ENCODE measurements at regions of chr7 and their contacts with region 1.

Region 1: GRCh38 chr7:20310963-20311742 is 19.5 kb upstream of the ITGB8 start:
- DNase-seq: peak in 2 of 4 experiments; percentile 24 to 75
- ATAC-seq: peak; percentile 74
- H3K4me3 ChIP-seq: no peak overlapping the region
- H3K27ac ChIP-seq: no peak overlapping the region
- H3K4me1 ChIP-seq: peaks cover 9 to 14% of the 10 kb centered on the region in 2 experiments
- H3K27me3 ChIP-seq: no peaks in the 10 kb centered on the region
- CTCF ChIP-seq: peak; percentile 34 to 61 (median 50); a peak in 3 of 6 replicates
- EP300 ChIP-seq: no peak
- POLR2A ChIP-seq: no peak
- RAD21 ChIP-seq: peak; percentile 85 to 86

Region 2: DNA sequence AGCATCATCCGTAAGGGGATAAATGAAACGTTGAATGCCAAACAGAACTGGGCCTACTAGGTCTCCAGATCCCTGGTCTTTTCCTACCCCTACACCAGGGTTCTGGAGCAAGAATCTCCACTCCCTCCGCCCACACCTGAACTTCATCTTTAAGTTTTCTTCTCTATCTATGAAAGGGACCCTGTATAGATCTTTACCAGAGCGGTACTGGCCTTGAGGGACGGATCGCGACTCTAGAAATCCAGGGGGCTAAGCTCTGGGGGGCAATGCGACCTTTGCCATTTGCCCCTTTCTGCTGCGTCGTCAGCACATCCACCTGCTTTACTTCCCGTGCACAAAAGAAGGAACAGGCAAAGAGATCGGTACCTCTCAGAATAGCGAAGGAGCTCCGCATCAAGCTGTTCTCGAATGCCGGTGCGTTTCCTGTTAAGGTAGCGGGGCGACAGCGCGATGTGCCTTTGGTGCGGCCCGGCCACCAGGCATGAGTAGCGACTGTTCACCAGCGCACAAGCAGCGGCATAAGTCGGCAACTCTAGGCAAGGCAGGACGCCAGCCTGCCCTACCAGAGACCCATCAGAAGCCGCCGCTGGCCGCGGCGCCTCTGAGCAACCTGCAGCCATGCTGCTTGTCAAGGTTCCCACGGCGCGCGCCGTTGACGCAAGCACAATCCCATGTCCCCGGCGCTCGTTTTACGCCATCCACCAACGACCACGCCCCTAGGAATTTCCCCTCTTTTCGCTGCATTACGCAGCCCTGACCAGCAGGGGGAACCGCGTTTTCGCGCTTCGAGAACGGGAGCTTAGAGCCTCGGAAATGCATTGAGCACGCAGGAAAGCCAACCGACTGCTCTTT is 602.5 kb before region 1 on chr7 and contains the start of gene POLR1F:
- CTCF ChIA-PET with region 1: interaction called, 6 read pairs
- POLR2A ChIA-PET with region 1: no interaction called
- in situ Hi-C with region 1: no loop called
- intact Hi-C with region 1: loop called (anchors 5 kb)
- DNase-seq: peak; percentile 85 to 96 (median 88)
- ATAC-seq: peak; percentile 96
- H3K4me3 ChIP-seq: peak within 1 kb of the TSS; percentile 64
- H3K27ac ChIP-seq: peak within 1 kb of the TSS; percentile 60
- H3K4me1 ChIP-seq: peaks cover 0 to 18% of the 10 kb centered on the region in 2 experiments; a peak in 2 of 5 replicates
- H3K27me3 ChIP-seq: no peaks in the 10 kb centered on the region; a peak in 1 of 5 replicates
- CTCF ChIP-seq: peak; percentile 84 to 96 (median 94)
- EP300 ChIP-seq: no peak; the same call in 1 of the 2 replicates
- POLR2A ChIP-seq: peak; percentile 95
- RAD21 ChIP-seq: peak; percentile 53 to 54
- polyA plus RNA-seq, gene POLR1F: 93.5 to 95.3 TPM

Region 3: GRCh38 chr7:19982841-19983835 is 328.0 kb before region 1 on chr7:
- CTCF ChIA-PET with region 1: no interaction called
- POLR2A ChIA-PET with region 1: no interaction called
- in situ Hi-C with region 1: no loop called
- intact Hi-C with region 1: loop called (anchors 2 kb)
- DNase-seq: peak in 1 of 4 experiments; percentile 36
- ATAC-seq: no peak; the same call in 2 of the 3 replicates
- H3K4me3 ChIP-seq: no peak overlapping the region
- H3K27ac ChIP-seq: no peak overlapping the region
- H3K4me1 ChIP-seq: no peaks in the 10 kb centered on the region
- H3K27me3 ChIP-seq: no peaks in the 10 kb centered on the region
- CTCF ChIP-seq: peak in 2 of 3 experiments; percentile 22 to 29; a peak in 2 of 6 replicates
- EP300 ChIP-seq: no peak
- POLR2A ChIP-seq: no peak
- RAD21 ChIP-seq: peak; percentile 45 to 70

Region 4: DNA sequence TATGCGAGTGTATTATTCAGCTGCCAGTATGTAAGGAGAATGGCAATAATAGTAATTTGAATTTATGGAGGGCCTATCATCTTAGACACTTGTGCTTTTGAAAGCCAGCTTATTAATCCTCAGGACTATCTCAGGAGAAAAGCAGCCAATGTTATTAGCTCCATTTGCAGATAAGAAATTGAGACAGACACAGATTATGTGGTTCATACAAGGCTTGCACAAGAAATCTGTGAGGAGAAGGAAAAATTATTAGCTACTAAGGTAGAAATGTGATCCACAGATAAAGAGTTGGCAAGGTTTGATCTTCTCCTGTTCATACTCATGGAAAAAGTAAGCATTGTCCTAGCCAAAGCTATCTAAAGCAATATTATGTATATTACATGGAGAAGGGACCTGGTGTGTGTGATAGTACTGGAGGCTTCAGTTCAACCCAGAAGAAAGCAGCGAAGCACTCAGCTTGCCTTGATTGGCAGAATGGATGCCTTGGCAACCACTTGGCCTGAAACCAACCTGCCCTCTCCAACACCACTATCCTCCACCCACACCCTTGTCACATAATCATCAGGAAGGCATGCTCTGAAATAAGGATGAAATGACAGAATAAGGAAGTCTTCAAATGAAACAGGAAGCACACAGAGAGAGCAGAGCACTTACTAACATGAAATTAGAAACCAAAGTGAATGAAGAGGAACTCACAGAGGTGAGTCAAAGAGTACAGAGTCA is 112.0 kb before region 1 on chr7:
- CTCF ChIA-PET with region 1: no interaction called
- POLR2A ChIA-PET with region 1: no interaction called
- in situ Hi-C with region 1: no loop called
- intact Hi-C with region 1: loop called (anchors 5 kb)
- DNase-seq: peak; percentile 18 to 76 (median 33)
- ATAC-seq: peak; percentile 84
- H3K4me3 ChIP-seq: no peak overlapping the region
- H3K27ac ChIP-seq: peak overlapping the region; percentile 62; the same call in 2 of the 3 replicates
- H3K4me1 ChIP-seq: peaks cover 0 to 42% of the 10 kb centered on the region in 2 experiments; a peak in 4 of 5 replicates
- H3K27me3 ChIP-seq: no peaks in the 10 kb centered on the region
- CTCF ChIP-seq: no peak
- EP300 ChIP-seq: 0 out of 2 replicates have a peak, but pooled peaks have one; percentile 21
- POLR2A ChIP-seq: no peak
- RAD21 ChIP-seq: no peak

Region 5: GRCh38 chr7:20598459-20599309 is 287.5 kb after region 1 on chr7:
- CTCF ChIA-PET with region 1: no interaction called
- POLR2A ChIA-PET with region 1: no interaction called
- in situ Hi-C with region 1: no loop called
- intact Hi-C with region 1: loop called (anchors 5 kb)
- DNase-seq: peak; percentile 27 to 58 (median 40)
- ATAC-seq: peak; percentile 88
- H3K4me3 ChIP-seq: no peak overlapping the region
- H3K27ac ChIP-seq: no peak overlapping the region
- H3K4me1 ChIP-seq: no peaks in the 10 kb centered on the region
- H3K27me3 ChIP-seq: no peaks in the 10 kb centered on the region; a peak in 1 of 5 replicates
- CTCF ChIP-seq: peak; percentile 57 to 87 (median 71); a peak in 5 of 6 replicates
- EP300 ChIP-seq: no peak
- POLR2A ChIP-seq: no peak
- RAD21 ChIP-seq: peak; percentile 92 to 96

Region 6: DNA sequence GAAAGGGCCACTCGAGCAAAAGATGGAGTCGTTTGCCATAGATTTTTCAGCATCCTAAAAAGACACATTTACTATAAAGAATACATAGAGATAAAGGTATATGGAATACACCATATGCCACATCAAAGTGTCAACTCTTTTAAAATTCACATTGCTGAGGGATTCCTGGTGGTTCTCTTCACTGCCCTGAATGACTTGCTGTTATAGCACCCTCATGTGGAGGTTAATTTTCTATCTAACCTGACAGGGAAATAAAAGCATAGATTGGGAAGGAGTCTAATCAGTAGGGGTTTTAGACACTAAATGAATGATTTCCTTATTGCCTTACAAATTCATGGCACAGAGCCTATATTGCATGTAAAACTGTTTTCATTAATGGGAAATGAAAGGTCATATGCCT is 1257.6 kb after region 1 on chr7:
- CTCF ChIA-PET with region 1: no interaction called
- POLR2A ChIA-PET with region 1: no interaction called
- in situ Hi-C with region 1: no loop called
- intact Hi-C with region 1: no loop called
- DNase-seq: peak in 2 of 4 experiments; percentile 9 to 12
- ATAC-seq: peak; percentile 72
- H3K4me3 ChIP-seq: no peak overlapping the region
- H3K27ac ChIP-seq: no peak overlapping the region
- H3K4me1 ChIP-seq: no peaks in the 10 kb centered on the region
- H3K27me3 ChIP-seq: no peaks in the 10 kb centered on the region; a peak in 1 of 5 replicates
- CTCF ChIP-seq: peak; percentile 20 to 46 (median 39); a peak in 3 of 6 replicates
- EP300 ChIP-seq: no peak
- POLR2A ChIP-seq: no peak
- RAD21 ChIP-seq: peak in 1 of 2 experiments; percentile 57; a peak in 3 of 4 replicates